ENCODE measurements at regions of chr1 and their contacts with region 1.

Region 1: DNA sequence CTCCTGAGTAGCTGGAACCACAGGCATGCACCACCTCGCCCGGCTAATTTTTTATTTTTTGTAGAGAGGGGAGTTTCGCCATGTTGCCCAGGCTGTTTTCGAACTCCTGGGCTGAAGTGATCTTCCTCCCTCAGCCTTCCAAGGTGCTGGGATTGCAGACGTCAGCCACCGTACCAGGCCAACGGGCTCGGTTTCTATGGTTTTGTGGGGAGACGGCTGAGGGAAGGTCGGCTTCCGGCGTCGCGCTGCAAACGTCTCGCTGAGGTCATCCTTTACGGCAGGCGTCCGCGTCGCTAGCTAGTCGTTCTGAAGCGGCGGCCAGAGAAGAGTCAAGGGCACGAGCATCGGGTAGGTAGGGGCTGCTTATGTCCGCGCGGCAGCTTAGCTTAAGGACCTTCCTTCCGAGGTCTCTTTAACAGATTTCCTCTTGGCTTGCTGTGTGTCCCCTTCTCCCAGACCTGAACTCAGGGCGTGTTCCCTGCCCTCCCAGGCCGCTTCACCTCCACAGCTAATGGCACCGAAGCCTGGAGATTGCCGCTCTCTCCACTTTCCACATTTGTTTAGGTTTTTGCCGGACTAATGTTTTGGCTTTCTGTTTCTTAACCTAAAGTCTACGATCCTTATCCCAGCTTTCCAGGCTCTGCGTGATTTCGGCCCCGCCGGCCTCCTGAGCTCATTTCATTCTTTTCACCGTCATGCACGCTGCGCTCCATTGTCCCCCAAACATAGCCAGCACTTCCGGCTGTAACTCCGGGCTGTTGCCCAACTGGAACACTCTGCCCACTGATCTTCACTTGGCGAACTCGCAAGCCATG is at the start of gene NDUFS5:
- DNase-seq: peak; percentile 65 to 92 (median 78)
- ATAC-seq: peak; percentile 88
- H3K4me3 ChIP-seq: peak within 1 kb of the TSS; percentile 66
- H3K4me3 Mint-ChIP-seq: peak within 1 kb of the TSS; percentile 94
- H3K27ac ChIP-seq: peak within 1 kb of the TSS; percentile 73 to 86
- H3K27ac Mint-ChIP-seq: peak within 1 kb of the TSS; percentile 96
- H3K4me1 ChIP-seq: peaks cover 33% of the 10 kb centered on the region
- H3K4me1 Mint-ChIP-seq: peaks cover 34% of the 10 kb centered on the region
- H3K27me3 ChIP-seq: no peaks in the 10 kb centered on the region
- H3K27me3 Mint-ChIP-seq: no peaks in the 10 kb centered on the region
- CTCF ChIP-seq: no peak
- total RNA-seq, gene NDUFS5: 153 to 156 TPM

Region 2: DNA sequence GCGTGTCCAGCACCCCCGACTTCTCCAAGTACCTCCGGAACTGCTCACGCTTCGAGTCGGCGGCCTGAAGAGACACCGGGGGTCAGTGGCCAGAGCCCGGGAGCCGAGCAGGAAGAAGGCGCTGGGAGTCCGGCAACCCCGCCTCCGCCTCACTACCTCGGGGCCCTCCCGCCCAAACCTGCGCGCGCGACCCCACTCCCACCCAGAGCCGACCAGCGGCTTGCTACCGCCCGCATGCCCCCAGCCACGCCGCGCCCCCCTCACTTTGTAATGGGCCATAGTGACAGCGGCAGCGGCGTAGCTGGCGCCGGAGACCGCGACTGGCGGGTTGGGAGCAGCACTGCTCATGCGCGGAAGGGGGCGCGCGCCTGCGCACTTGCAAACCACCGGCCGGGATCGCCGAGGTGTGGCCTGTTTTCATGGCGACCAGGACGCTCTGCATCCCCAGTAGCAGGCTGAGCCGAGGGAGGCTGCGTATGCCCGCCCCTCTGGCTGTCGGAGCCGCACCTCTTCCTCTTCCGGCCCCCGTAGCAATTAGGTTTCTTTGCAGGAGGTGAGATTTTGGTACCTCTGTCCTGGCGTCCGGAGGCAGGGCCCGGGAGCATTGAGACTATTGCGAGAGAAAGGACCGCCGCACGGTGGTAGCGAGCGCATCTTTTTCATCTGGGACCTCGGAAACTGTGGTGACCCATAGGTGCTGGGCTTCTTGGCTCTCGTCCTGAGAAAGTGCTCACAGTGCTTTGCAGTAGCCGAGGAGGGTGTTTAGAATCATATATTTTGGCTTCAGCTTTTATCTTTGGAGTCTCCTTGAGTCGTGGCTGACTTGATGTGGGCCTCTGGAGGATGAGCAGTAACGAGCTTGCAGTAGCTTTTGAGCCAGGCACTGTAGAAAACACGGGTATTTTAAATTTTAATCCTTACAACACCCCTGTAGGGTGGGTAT is 153.0 kb before region 1 on chr1 and contains the start of gene MYCBP:
- CTCF ChIA-PET with region 1: interaction called, 4 read pairs
- POLR2A ChIA-PET with region 1: interaction called, 15 read pairs
- intact Hi-C with region 1: loop called in 1 of 2 experiments (anchors 5 kb)
- DNase-seq: peak; percentile 94 to 99 (median 97)
- ATAC-seq: peak; percentile 99
- H3K4me3 ChIP-seq: peak within 1 kb of the TSS; percentile 71
- H3K4me3 Mint-ChIP-seq: peak within 1 kb of the TSS; percentile 93
- H3K27ac ChIP-seq: peak within 1 kb of the TSS; percentile 13 to 73
- H3K27ac Mint-ChIP-seq: peak within 1 kb of the TSS; percentile 90
- H3K4me1 ChIP-seq: peaks cover 17% of the 10 kb centered on the region
- H3K4me1 Mint-ChIP-seq: peaks cover 34% of the 10 kb centered on the region
- H3K27me3 ChIP-seq: no peaks in the 10 kb centered on the region
- H3K27me3 Mint-ChIP-seq: no peaks in the 10 kb centered on the region
- CTCF ChIP-seq: no peak
- total RNA-seq, gene MYCBP: 1.5 to 2.2 TPM

Region 3: DNA sequence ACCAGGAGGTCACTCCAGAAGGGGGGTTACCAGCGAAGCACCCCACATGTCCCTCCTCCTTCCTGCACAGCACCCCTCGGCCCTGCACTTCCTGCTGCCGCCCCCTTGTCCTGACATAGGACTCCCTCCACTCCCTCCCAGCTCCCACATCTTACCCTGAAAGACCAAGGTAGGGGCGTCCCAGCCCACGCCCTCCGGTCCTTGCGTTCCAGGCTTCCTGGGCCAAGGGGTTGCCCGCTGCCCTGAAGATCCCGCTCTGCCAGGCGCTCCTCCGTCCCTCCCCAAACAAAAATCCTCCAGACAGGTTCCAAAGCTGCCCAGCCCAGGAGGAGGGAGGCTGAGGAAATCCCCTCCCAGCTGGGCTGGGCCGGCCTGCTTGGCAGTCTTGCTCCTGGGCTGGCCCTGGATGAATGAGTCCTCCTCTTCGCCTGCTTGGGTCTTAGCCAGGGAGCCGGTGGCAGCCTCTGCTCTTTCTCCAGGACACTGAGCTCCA is 84.7 kb before region 1 on chr1 and contains the start of gene RHBDL2:
- CTCF ChIA-PET with region 1: no interaction called
- POLR2A ChIA-PET with region 1: no interaction called
- intact Hi-C with region 1: no loop called
- DNase-seq: no peak
- ATAC-seq: no peak
- H3K4me3 ChIP-seq: no peak within 1 kb of the TSS
- H3K4me3 Mint-ChIP-seq: no peak within 1 kb of the TSS
- H3K27ac ChIP-seq: no peak within 1 kb of the TSS
- H3K27ac Mint-ChIP-seq: no peak within 1 kb of the TSS
- H3K4me1 ChIP-seq: no peaks in the 10 kb centered on the region
- H3K4me1 Mint-ChIP-seq: no peaks in the 10 kb centered on the region
- H3K27me3 ChIP-seq: no peaks in the 10 kb centered on the region
- H3K27me3 Mint-ChIP-seq: no peaks in the 10 kb centered on the region
- CTCF ChIP-seq: no peak
- total RNA-seq, gene RHBDL2: not detected

Region 4: GRCh38 chr1:38973659-38974424 is 52.4 kb before region 1 on chr1:
- CTCF ChIA-PET with region 1: interaction called, 5 read pairs
- POLR2A ChIA-PET with region 1: interaction called, 31 read pairs
- intact Hi-C with region 1: loop called in 1 of 2 experiments (anchors 10 kb)
- DNase-seq: no peak
- ATAC-seq: no peak
- H3K4me3 ChIP-seq: no peak overlapping the region
- H3K4me3 Mint-ChIP-seq: no peak overlapping the region
- H3K27ac ChIP-seq: no peak overlapping the region
- H3K27ac Mint-ChIP-seq: no peak overlapping the region
- H3K4me1 ChIP-seq: peaks cover 22% of the 10 kb centered on the region
- H3K4me1 Mint-ChIP-seq: peaks cover 17% of the 10 kb centered on the region
- H3K27me3 ChIP-seq: no peaks in the 10 kb centered on the region
- H3K27me3 Mint-ChIP-seq: no peaks in the 10 kb centered on the region
- CTCF ChIP-seq: no peak

Region 5: GRCh38 chr1:38990738-38991639 is 35.3 kb before region 1 on chr1 and contains the start of gene AKIRIN1:
- CTCF ChIA-PET with region 1: interaction called, 3 read pairs
- POLR2A ChIA-PET with region 1: interaction called, 10 read pairs
- intact Hi-C with region 1: loop called (anchors 2 kb)
- DNase-seq: peak; percentile 82 to 96 (median 92)
- ATAC-seq: peak; percentile 84
- H3K4me3 ChIP-seq: peak within 1 kb of the TSS; percentile 91
- H3K4me3 Mint-ChIP-seq: peak within 1 kb of the TSS; percentile 90
- H3K27ac ChIP-seq: peak within 1 kb of the TSS; percentile 83 to 89
- H3K27ac Mint-ChIP-seq: peak within 1 kb of the TSS; percentile 81
- H3K4me1 ChIP-seq: peaks cover 36% of the 10 kb centered on the region
- H3K4me1 Mint-ChIP-seq: peaks cover 43% of the 10 kb centered on the region
- H3K27me3 ChIP-seq: no peaks in the 10 kb centered on the region
- H3K27me3 Mint-ChIP-seq: no peaks in the 10 kb centered on the region
- CTCF ChIP-seq: no peak
- total RNA-seq, gene AKIRIN1: 108 to 112 TPM

Region 6: DNA sequence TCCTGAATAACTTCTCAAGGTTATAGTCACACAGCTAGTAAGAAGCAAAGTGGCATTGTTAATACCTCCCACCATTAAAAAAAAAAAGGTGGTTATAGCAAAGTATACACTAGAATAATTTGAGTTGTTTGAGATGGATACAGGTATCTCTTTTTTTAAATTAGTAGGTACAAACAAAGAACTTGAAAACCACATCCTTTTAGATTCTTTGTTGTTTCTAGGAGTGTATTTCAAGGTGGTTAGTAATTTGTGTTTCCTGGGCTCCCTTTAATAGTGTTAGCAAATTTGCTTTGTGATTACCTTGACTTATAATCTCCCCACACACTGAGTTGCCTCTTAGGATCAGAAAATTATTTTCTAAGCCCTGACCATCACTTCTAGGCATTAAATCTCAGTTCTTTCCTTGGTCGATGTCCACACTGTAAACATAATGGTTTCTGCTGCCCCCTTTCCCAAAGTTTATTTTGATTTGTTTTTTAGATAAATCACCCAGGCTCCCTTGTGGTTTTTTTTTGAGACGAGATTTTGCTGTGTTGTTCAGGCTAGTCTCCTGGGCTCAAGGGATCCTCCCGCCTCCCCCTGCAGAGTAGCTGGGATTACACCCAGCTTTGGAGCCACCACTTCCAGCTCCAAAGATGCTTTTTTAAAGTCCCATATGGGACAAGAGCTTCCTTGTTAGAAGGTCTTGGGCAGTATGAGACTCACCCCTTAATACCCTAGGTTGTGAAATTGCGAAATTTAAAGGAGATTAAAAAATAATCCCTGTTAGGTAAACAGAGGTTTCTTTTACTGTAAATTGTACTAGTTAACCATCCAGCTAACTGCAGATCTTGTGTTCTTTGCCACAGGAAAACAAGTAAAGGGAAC is 29.0 kb before region 1 on chr1:
- CTCF ChIA-PET with region 1: interaction called, 3 read pairs
- POLR2A ChIA-PET with region 1: interaction called, 21 read pairs
- intact Hi-C with region 1: loop called (anchors 2 kb)
- DNase-seq: peak in 3 of 14 experiments; percentile 38 to 78 (median 42)
- ATAC-seq: peak; percentile 80
- H3K4me3 ChIP-seq: peak overlapping the region; percentile 10
- H3K4me3 Mint-ChIP-seq: peak overlapping the region; percentile 81
- H3K27ac ChIP-seq: peak overlapping the region; percentile 31 to 42
- H3K27ac Mint-ChIP-seq: peak overlapping the region; percentile 87
- H3K4me1 ChIP-seq: peaks cover 57% of the 10 kb centered on the region
- H3K4me1 Mint-ChIP-seq: peaks cover 71% of the 10 kb centered on the region
- H3K27me3 ChIP-seq: no peaks in the 10 kb centered on the region
- H3K27me3 Mint-ChIP-seq: no peaks in the 10 kb centered on the region
- CTCF ChIP-seq: no peak